ENCODE measurements at regions of chr2 and their contacts with region 1.

Region 1: DNA sequence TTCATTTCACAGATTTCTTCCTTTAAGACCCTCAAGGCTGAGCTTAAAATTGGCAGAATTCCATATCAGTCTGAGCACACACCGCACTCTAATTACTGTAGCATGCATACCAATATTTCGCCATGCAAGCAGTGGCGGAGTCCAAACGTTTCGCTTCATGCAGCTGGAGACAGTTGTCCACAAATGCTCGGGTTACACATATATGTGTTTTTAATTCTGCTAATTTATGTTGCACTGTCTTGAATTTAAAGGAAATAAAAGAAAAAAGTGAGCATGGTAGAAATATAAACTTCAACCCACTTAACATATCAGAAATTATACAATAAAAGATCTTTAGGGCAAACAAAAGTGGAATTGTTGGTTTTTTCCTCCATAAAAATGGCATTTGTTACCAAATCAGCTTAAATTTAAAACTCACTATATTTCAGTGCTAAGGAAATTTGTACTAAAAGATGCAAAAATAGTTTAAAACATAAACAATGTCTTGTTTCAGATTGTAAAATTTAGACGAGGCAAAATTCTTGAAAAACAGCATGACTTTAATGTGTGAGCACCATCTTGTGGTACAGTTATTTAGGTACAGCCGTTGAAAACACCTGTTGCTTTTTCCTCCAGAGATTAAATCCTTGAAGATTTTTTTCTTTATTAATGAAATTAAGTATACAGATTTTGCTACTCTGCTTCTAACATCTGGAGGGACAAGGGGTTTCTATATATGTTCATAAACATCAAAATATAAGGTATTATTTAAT is 24.1 kb upstream of the KANSL1L start:
- ATAC-seq: peak in 2 of 8 experiments; percentile 51 to 54
- H3K4me3 ChIP-seq: no peak overlapping the region
- H3K27ac ChIP-seq: no peak overlapping the region
- H3K4me1 ChIP-seq: no peaks in the 10 kb centered on the region

Region 2: DNA sequence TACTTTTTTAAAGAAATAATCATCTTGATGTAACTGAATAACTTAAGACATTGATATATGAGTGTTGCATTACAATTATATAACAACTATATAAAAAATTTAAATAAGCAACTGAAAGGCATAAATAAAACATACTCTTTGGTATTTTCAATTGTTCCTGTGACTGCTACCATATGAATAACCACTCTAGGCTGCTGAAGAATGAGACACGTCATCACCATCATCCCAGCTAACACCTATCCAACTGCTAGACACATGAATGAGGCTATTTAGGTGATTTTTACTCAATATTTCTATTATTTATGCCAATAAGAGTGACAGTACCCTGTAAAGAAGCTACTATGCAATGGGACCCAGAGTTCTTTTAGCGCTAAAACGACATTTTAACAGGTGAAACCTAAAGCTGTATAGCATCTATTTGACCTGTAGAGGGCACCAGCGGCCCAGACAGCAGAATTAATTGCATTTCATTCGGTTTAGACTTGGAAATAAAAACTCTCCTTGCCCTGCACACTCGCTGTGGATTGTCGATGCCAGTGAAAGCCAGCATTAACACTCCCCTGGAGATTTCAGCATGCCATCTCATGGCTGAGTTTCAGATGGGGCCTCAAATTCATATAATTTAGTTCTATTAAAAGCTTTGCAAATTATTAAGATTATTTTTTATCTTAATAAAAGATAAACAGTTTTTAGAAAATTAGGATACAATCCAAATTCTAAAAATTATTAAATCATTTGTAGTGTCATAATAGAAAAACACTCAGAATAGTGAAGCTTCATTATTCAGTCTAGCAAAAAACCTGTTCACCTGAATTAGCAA is 860.9 kb before region 1 on chr2:
- in situ Hi-C with region 1: loop called in 1 of 9 experiments (anchors 25 kb)
- ATAC-seq: peak; percentile 49 to 80 (median 62)
- H3K4me3 ChIP-seq: no peak overlapping the region
- H3K27ac ChIP-seq: no peak overlapping the region
- H3K4me1 ChIP-seq: peaks cover 0 to 2% of the 10 kb centered on the region in 2 donors

Region 3: DNA sequence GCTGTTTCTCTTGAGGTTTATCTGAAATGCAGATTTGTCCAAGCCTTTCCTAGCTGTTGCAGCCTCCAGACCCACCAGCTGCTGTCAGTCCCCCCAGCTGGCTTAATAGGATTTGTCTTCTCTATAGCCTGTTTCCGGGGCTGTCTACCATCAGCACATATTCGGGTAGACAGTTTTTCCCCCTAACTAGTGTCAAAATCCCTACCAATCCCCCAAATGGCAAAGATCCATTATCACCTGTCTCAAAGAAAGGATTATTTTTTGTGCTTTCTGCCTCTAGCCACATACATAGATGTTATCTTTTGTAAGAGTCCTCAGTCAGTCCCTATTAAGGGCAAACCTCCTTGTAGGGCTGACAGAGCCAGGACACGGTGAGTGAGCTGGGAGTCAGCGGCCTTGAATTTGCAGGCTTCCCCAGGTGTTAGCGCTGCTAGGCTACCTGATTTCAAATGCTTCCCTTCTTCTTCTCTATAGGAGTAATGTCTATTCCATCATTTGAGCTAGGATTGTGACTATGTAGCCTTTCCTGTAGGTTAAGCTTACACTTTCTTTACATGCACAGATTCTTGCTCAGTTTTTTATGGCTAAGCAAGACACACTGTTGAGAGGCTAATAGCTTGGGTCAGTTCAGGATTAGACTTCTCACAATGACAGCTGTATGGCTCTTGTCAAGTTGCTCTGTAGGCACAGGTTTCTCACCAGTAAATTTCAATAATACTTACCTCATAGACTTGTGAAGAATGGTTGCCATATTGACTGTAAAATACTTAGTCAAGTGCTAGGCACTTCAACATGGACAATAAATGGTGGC is 594.7 kb before region 1 on chr2:
- in situ Hi-C with region 1: no loop called
- ATAC-seq: peak in 5 of 8 experiments; percentile 46 to 77 (median 59)
- H3K4me3 ChIP-seq: no peak overlapping the region
- H3K27ac ChIP-seq: peak overlapping the region; percentile 16 to 80
- H3K4me1 ChIP-seq: peaks cover 25 to 61% of the 10 kb centered on the region in 2 donors

Region 4: DNA sequence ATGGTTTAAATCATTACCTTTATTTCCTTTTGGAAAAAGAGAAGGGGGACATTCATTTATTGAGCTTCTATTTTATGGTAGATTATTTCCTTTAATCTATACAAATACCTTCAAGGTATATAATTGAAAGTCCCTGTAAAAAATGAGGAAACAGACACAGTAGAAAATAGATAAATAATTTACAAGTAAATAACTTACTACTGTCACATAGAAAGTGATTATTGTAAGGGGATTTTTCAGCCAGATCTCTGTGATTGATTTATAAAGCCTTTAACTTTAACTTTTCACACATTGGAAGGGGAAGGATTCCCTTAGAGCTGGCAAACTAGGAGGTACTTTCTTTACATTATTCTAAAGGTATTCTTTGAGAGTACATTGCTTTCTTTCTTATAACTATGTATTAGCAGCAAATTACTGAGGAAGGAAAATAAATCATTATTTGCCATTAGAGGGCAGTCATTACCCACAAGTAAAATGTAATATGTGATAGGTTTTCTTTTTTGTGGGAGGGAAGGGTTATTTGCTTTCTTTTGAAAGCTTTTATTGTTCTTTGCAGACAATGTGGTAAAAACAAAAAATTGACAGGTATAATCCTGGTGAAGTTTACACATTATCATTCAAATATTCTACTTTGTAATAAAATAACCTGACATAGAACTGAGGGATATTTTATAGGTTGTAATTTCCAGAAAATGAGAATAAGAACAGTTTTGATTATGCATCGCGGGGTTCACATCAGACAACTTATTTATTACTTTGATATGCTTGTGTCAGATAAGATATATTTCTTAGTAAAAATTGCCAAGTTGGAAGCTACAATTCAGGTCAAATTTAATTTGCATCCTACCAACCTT is 217.7 kb before region 1 on chr2:
- in situ Hi-C with region 1: loop called in 5 of 9 experiments (anchors 10 to 25 kb)
- ATAC-seq: no peak
- H3K4me3 ChIP-seq: no peak overlapping the region
- H3K27ac ChIP-seq: no peak overlapping the region
- H3K4me1 ChIP-seq: no peaks in the 10 kb centered on the region

Region 5: GRCh38 chr2:210004881-210005280 is 190.4 kb before region 1 on chr2:
- in situ Hi-C with region 1: no loop called
- ATAC-seq: no peak
- H3K4me3 ChIP-seq: no peak overlapping the region
- H3K27ac ChIP-seq: no peak overlapping the region
- H3K4me1 ChIP-seq: peaks cover 13 to 25% of the 10 kb centered on the region in 2 donors

Region 6: GRCh38 chr2:210072922-210073509 is 122.3 kb before region 1 on chr2:
- in situ Hi-C with region 1: loop called in 1 of 9 experiments (anchors 10 kb)
- ATAC-seq: peak in 3 of 8 experiments; percentile 67 to 74 (median 73)
- H3K4me3 ChIP-seq: no peak overlapping the region
- H3K27ac ChIP-seq: no peak overlapping the region
- H3K4me1 ChIP-seq: no peaks in the 10 kb centered on the region

Region 7: GRCh38 chr2:210428415-210429179 is 233.3 kb after region 1 on chr2:
- in situ Hi-C with region 1: no loop called
- ATAC-seq: no peak
- H3K4me3 ChIP-seq: no peak overlapping the region
- H3K27ac ChIP-seq: no peak overlapping the region
- H3K4me1 ChIP-seq: no peaks in the 10 kb centered on the region